ENCODE measurements at regions of chr3 and their contacts with region 1.

Region 1: DNA sequence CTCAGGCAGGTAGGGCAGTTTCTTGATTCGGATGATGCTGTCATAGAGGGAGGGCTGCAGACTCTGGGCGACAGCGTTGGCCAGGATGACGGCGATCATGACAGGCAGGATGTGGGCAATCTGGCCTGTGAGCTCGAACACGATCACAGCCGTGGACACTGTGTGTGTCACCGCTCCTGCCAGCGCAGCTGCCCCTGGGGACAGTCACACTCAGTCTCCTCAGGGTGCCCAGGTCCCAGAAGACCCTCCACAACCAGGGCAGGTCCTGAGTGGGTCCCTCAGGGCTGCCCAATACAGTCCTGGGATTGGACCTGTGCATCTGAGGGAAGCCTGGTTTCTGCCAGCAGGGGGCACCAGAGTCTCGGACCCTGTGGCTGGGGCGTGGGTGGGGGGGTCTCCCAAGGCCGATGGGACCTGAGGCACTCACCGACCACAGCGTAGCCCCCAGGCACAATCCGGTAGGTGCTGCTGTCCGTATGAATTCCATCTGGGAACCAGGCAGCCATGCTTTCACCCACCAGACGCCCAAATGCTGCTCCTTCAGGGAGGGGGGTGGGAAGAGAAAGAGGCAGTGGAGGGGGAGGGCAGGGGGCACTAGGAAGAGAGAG is 7.2 kb downstream of the CLCN2 start:
- DNase-seq: no peak
- H3K4me3 ChIP-seq: no peak overlapping the region
- H3K27ac ChIP-seq: no peak overlapping the region
- H3K4me1 ChIP-seq: peaks cover 0 to 27% (median 0%) of the 10 kb centered on the region in 3 donors
- H3K27me3 ChIP-seq: no peaks in the 10 kb centered on the region
- CTCF ChIP-seq: peak; percentile 42 to 73 (median 62)
- POLR2A ChIP-seq: no peak

Region 2: DNA sequence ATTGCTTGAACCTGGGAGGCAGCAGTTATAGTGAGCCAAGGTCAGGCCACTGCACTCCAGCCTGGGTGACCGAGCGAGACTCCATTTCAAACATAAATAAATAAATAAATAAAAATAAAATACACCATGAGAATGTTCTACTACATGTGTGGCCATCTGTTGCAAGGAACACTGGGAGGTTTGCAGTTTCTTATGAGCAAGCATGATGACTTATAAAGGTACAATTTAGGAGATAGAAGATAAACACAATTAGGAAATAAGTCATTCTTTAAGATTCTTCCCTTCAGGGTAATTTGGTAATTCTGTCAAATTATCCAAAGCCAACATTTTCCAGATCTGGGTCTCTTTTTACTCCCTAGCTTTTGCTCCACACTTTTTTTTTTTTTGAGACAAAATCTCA is 288.0 kb before region 1 on chr3:
- intact Hi-C with region 1: no loop called
- DNase-seq: no peak
- H3K4me3 ChIP-seq: no peak overlapping the region
- H3K27ac ChIP-seq: no peak overlapping the region
- H3K4me1 ChIP-seq: no peaks in the 10 kb centered on the region
- H3K27me3 ChIP-seq: peaks cover 0 to 13% (median 0%) of the 10 kb centered on the region in 4 donors
- CTCF ChIP-seq: no peak
- POLR2A ChIP-seq: no peak

Region 3: GRCh38 chr3:184305577-184305976 is 48.6 kb before region 1 on chr3:
- intact Hi-C with region 1: loop called (anchors 10 kb)
- DNase-seq: no peak
- H3K4me3 ChIP-seq: no peak overlapping the region
- H3K27ac ChIP-seq: no peak overlapping the region
- H3K4me1 ChIP-seq: peaks cover 0 to 5% (median 2%) of the 10 kb centered on the region in 3 donors
- H3K27me3 ChIP-seq: no peaks in the 10 kb centered on the region
- CTCF ChIP-seq: peak in 3 of 6 experiments; percentile 18 to 44 (median 37)
- POLR2A ChIP-seq: no peak

Measured in esophagus squamous epithelium (tissue), 5 donors.